ENCODE measurements at regions of chr20 and their contacts with region 1.

Region 1: DNA sequence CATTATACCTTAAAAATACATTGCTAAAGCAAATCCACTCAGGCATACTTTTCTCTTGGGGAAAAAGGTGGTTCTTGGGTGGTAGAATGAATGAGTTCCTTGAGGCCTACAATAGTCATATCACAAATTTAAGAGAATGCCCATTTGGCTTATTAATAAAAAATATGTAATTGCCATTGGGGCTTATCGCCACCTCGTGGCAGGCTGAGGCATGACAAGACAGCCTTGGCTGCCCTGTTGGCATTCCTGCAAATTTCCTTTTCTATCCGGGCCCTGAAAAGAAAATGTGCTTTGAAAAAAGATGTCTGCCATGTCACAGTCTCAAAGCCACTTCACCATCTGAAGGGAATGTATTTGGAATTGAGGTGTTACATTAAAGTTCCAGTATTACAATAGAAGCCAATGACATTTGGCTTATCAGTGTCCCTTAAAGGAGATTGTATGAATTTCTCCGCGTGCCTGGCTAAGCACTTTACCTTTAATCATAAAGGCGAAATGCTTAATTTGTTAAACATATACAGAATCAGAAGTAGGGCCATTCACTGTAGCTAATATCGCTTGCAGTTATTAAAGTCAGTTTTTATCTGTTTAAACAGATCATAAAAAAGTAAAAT is 188.3 kb upstream of the ZFP64 start:
- DNase-seq: peak in 1 of 2 experiments; percentile 42
- H3K4me3 ChIP-seq: no peak overlapping the region
- H3K27ac ChIP-seq: no peak overlapping the region
- H3K4me1 ChIP-seq: no peaks in the 10 kb centered on the region
- H3K27me3 ChIP-seq: no peaks in the 10 kb centered on the region
- CTCF ChIP-seq: peak; percentile 98

Region 2: DNA sequence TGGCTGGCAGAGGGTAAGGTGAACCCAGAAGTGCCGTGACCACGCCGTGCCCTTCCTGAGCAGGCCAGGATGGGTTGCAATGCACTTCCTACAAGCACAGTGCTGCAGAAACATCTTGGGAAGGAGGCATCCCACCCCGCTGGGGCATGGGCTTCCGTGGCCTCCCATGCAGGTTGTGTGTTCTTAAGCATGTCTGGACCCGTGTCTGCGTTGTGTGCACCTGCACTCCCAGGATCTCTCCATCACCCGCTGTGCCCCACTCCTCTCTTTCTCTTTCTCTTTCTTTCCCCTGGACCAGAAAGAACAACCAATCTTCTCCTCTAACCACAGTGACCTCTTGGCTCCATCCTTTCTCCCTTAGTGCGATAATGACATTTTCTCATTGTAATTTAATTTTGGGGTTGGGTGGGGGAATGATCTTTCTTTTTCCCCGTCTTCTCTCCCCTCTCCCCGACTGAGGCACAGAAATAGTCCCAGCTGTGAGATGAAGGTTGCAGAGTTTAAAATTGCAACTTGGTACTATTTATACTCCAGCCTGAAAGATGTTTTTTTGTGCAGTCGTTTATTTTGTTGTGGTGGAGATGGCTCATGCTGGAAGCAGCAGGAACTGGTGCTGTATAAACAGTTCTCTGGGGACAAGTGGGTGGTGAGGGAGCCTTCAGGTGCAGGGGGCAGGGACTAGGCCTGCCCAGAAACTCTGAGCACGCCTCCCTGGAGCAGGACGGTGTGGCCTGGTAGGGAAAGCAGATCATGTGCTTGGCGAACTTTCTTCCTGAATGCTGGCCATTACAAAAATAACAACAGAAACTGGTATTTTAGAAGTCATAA is 1564.5 kb before region 1 on chr20:
- CTCF ChIA-PET with region 1: no interaction called
- POLR2A ChIA-PET with region 1: no interaction called
- intact Hi-C with region 1: loop called (anchors 10 kb)
- DNase-seq: peak; percentile 46 to 53
- H3K4me3 ChIP-seq: no peak overlapping the region
- H3K27ac ChIP-seq: no peak overlapping the region; the same call in 1 of the 2 replicates
- H3K4me1 ChIP-seq: 0 out of 2 replicates have a peak, but pooled peaks cover 7% of the 10 kb centered on the region
- H3K27me3 ChIP-seq: no peaks in the 10 kb centered on the region
- CTCF ChIP-seq: no peak

Region 3: DNA sequence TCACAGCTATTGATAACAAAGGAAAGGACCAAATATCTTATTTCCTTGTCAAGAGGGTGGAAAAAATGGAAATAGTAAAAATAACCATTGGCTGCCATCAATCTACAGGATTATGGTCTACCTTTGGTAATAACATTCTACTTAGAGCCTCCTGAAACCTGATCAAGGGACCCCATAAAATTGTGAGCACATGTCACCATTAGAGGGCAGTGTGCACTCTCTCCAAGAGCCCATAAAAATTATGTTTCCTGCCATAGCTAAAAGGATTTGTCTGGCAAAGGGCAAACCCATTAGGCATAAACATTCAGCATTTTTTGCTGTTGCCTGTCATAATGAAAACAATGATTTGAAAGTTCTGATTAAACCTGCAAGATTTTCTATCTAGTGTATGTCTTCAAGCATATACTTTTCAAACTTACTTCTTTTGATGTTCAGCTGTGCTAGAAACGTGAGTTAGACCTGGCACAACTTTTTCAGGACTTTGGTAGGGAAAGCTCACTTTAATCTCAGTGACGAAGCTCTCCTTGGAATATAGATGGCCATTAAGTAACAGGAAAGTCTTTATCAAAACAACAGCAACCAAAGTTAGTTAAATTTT is 67.6 kb before region 1 on chr20:
- CTCF ChIA-PET with region 1: no interaction called
- POLR2A ChIA-PET with region 1: no interaction called
- intact Hi-C with region 1: loop called (anchors 2 kb)
- DNase-seq: peak; percentile 35 to 51
- H3K4me3 ChIP-seq: no peak overlapping the region
- H3K27ac ChIP-seq: no peak overlapping the region
- H3K4me1 ChIP-seq: no peaks in the 10 kb centered on the region
- H3K27me3 ChIP-seq: peaks cover 71% of the 10 kb centered on the region
- CTCF ChIP-seq: peak; percentile 87